OCI-LY7 (cell line): ENCODE measurements at regions of chr17 and their contacts with region 1.

Region 1: DNA sequence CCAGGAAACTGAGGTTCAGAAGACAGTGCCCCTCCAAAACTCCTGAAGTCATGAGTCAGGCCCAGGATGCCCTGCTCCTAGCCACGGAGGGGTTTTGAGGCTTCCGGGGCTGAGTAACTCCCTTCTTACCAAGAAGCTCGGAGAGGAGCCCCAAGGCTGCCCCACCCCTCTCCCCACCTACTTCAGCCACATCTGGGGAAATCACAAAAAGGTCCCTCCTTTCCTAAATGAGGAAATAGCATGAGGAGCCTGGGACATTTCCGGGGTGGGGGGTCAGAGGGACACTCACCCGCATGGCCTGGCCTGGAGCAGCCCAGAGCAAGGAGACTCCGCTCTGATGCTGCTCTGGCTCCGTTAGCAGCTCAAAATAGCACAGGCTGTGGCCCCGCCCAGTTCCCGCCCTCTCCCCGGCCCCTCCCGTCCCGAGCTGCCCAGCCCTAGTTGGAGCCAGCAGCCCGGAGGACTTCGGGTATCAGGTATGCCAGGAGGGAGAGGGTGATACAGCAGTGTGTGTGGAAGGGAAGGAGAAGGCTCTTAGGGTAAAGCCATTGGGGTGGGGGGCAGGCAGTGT is 40.1 kb downstream of the MYO18A start:
- DNase-seq: peak; percentile 78
- H3K4me3 ChIP-seq: peak overlapping the region; percentile 78
- H3K27ac ChIP-seq: peak overlapping the region; percentile 87
- H3K4me1 ChIP-seq: peaks cover 52% of the 10 kb centered on the region
- CTCF ChIP-seq: no peak

Region 2: GRCh38 chr17:29124117-29124924 is 15.8 kb before region 1 on chr17:
- CTCF ChIA-PET with region 1: interaction called, 20 read pairs
- POLR2A ChIA-PET with region 1: interaction called, 6 read pairs
- intact Hi-C with region 1: loop called (anchors 1 kb)
- DNase-seq: peak; percentile 71
- H3K4me3 ChIP-seq: no peak overlapping the region
- H3K27ac ChIP-seq: no peak overlapping the region
- H3K4me1 ChIP-seq: no peaks in the 10 kb centered on the region
- CTCF ChIP-seq: peak; percentile 84